ENCODE measurements at regions of chr6 and their contacts with region 1.

Region 1: DNA sequence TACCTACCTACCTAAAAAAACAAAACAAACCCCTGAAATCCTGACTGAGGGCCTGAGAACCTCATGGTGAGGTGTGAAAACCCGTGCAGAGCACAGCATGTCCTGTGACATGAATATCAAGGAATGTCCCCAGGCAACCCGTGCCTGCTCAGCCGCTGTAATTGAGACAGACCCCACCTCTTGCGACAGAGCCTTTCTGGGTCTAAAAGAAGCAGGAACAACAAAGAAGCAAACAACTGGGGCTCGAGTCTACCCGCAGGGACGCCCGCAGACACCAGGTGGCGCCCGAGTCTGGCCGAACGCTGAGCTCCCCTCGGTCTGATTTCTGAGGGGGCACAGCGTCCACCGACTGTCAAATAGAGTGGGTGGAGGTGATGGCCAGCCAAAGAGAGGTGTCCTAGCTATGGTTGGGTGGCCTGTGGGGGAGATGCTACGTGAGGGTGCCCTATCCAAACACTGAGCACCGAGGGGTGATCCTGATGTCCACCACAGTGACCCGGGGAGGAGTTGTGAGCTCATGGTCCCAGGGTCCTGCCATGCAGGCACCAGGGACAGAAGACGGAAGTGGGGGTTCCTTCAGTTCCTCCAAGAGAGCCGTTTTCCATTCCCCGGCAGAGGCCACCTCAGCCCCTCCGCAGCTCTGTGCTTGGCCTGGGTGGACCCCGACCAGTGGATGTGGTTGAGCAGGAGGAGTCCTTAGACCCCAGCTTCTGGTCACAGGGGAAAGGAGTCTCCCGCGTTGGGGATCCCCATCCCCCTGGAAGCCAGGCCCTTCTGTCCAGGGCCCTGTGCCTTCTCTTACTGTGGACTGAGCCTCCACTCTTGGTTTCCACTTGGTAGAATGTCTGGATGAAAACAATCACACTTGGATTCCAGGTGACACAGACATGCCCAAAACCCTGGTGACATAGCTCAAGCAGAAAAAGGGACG is 268.2 kb downstream of the CDC5L start:
- DNase-seq: peak; percentile 81
- H3K4me3 Mint-ChIP-seq: peak overlapping the region; percentile 38
- H3K27ac Mint-ChIP-seq: peak overlapping the region; percentile 62
- H3K4me1 Mint-ChIP-seq: peaks cover 10% of the 10 kb centered on the region
- H3K27me3 Mint-ChIP-seq: no peaks in the 10 kb centered on the region

Region 2: DNA sequence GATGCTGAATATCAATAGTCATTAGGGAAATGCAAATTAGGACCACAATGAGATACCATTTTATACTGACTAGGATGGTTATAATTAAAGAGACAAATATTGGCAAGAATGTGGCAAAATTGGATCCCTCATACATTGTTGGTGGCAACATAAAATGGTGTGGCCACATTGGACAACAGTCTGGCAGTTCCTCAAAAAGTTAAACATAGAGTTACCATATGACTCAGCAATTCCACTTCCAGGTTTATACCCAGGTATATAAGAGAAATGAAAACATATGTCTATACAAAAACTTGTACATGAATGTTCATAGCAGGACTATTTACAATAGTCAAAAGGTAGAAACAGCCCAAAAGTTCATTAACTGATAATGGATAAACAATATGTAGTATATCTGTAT is 1345.1 kb before region 1 on chr6:
- CTCF ChIA-PET with region 1: no interaction called
- intact Hi-C with region 1: no loop called
- DNase-seq: no peak
- H3K4me3 Mint-ChIP-seq: no peak overlapping the region
- H3K27ac Mint-ChIP-seq: no peak overlapping the region
- H3K4me1 Mint-ChIP-seq: peaks cover 6% of the 10 kb centered on the region
- H3K27me3 Mint-ChIP-seq: peaks cover 2% of the 10 kb centered on the region

Region 3: DNA sequence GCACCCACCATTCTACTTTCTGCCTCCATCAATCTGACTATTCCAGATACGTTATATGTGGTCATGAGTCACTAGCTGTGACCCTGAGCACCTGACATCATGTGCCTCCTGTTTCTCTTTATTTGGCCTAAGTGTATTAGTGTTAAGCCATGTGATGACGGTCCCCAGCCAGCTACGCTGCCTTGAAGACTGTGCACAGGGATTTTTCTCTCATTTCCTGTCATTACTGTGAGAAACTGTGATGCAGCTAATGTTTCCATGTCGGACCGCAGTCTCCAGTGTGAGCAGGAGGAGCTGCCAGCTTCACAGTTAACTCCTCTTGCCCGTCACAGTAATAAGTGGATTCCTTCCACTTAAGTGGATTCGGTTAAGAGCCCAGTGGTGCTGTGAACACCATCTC is 323.1 kb before region 1 on chr6:
- CTCF ChIA-PET with region 1: no interaction called
- intact Hi-C with region 1: no loop called
- DNase-seq: no peak
- H3K4me3 Mint-ChIP-seq: no peak overlapping the region
- H3K27ac Mint-ChIP-seq: no peak overlapping the region
- H3K4me1 Mint-ChIP-seq: no peaks in the 10 kb centered on the region
- H3K27me3 Mint-ChIP-seq: peaks cover 17% of the 10 kb centered on the region

Region 4: DNA sequence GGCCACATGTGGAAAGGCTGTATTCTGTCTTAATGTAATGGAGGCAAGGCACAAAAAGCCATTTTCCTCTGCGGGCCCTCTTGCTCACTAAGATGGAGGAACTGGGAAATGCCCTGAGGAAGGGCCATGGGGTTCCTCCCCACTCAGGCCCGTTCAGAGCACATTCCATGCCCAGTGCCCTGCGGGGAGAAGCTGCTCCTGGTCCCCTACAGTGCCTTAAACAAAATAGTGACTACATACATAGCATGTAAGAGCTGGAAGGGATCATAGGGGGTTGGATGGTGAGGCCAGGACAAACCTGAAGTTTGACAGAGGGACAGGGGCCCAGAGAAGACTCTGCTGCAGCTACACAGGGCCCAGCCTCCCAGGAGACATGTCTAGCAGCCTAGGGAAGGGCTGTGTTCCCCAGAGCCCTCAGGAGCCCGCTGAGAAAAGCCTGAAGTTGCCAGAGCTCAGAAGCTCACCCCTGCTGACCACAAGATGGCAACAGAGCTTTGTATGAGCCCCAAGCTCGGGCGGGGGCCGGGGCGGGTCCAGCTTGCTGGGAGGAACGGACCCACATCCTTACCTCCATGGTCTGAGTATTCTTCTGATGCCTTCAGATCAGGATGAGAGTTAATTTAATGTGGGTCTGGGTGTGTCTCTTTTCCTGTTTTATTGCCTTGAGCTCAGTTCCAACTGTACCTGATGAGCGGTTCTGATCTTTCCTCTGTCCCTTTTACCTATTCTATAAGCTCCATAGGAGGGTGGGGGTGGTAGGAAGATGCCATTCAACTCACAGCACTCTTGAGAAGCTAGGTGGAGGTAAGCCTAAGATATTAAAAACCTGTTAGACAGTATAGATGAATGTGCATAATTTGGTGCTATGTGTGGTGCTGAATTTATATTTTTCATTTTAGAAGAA is 25.3 kb before region 1 on chr6:
- CTCF ChIA-PET with region 1: interaction called, 11 read pairs
- intact Hi-C with region 1: loop called (anchors 1 kb)
- DNase-seq: peak; percentile 50
- H3K4me3 Mint-ChIP-seq: no peak overlapping the region
- H3K27ac Mint-ChIP-seq: no peak overlapping the region
- H3K4me1 Mint-ChIP-seq: peaks cover 13% of the 10 kb centered on the region
- H3K27me3 Mint-ChIP-seq: no peaks in the 10 kb centered on the region

Region 5: DNA sequence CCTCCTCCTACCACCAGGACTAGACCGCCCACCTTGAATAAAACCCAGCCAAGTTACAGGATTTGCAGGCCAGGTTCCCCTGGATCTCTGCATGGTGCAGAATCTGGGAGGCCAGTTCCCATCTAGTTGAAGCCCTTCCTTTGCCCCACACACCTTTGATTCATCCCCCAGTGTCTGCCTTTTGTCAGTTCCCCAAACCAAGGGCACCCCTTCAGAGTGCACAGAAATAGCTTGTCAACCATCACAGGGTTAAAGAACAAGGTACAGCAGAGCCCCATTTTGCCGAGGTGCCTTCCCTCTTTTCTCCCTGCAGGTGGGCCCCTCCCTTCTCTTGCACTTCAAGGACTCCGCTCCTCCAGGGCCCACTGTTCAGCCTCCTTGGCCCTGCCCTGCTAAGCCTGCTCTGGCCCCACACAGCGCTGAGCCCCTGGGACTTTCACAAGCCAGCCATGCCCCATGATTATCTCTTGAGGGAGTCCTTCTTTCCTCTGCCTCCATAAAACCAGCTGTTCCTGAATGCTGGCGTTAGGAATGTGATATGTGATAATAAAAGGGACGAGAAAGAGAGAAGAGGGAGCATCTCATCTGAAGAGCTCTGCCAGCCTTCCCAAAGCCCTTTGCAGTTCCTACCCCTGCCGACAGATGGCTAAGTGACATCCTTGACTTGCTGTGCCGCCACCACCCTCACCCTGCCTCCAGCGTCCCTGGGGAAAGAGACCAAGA is 12.2 kb after region 1 on chr6:
- CTCF ChIA-PET with region 1: interaction called, 11 read pairs
- intact Hi-C with region 1: no loop called
- DNase-seq: peak; percentile 52
- H3K4me3 Mint-ChIP-seq: no peak overlapping the region
- H3K27ac Mint-ChIP-seq: no peak overlapping the region
- H3K4me1 Mint-ChIP-seq: no peaks in the 10 kb centered on the region
- H3K27me3 Mint-ChIP-seq: no peaks in the 10 kb centered on the region

Measured in activated naive CD4-positive, alpha-beta T cell treated with anti-CD3 and anti-CD28 coated beads for 36 hours (primary cell).